T-cell (primary cell): ENCODE measurements at regions of chr12 and their contacts with region 1.

Region 1: DNA sequence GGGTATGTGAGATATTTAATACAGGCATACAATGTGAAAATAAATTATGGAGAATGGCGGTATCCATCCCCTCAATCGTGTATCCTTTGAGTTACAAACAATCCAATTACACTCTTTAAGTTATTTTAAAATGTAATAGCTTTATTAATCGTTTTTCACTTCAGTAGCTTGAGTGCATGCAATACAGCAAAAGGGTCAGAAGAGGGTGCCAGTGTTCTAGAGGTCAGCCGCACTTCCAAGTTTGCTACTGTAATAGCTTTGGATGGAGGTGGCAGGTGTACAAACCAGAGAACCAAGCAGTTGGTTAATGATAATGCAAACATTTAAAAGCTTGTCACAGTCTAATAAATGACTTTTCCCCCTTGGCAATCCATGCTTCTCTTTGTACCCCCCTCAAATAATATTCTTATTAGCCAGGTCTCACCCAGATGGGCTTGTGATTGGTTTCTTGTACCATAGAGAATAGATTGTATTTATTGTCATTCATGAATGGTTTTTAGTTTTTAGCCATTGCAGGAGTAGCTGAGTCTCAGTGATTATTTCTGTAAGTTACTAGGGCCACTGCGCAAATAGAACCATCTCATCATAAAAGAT is 127.0 kb downstream of the ERC1 start:
- DNase-seq: peak; percentile 34 to 87 (median 62)
- ATAC-seq: peak in 3 of 4 experiments; percentile 41 to 73 (median 50)
- H3K4me3 ChIP-seq: no peak overlapping the region
- H3K4me3 Mint-ChIP-seq: no peak overlapping the region
- H3K27ac ChIP-seq: no peak overlapping the region
- H3K27ac Mint-ChIP-seq: no peak overlapping the region
- H3K4me1 ChIP-seq: peaks cover 4% of the 10 kb centered on the region in 2 experiments
- H3K4me1 Mint-ChIP-seq: peaks cover 11 to 19% (median 12%) of the 10 kb centered on the region in 3 donors
- H3K27me3 ChIP-seq: no peaks in the 10 kb centered on the region
- H3K27me3 Mint-ChIP-seq: no peaks in the 10 kb centered on the region

Region 2: GRCh38 chr12:1130164-1130563 is 12.1 kb after region 1 on chr12:
- CTCF ChIA-PET with region 1: interaction called, 6 to 18 read pairs
- POLR2A ChIA-PET with region 1: no interaction called
- DNase-seq: peak in 2 of 35 experiments; percentile 5 to 6
- ATAC-seq: peak in 1 of 4 experiments; percentile 53
- H3K4me3 ChIP-seq: no peak overlapping the region
- H3K4me3 Mint-ChIP-seq: no peak overlapping the region
- H3K27ac ChIP-seq: no peak overlapping the region
- H3K27ac Mint-ChIP-seq: peak overlapping the region in 1 of 2 donors; percentile 56
- H3K4me1 ChIP-seq: peaks cover 2 to 11% of the 10 kb centered on the region in 2 experiments
- H3K4me1 Mint-ChIP-seq: peaks cover 45 to 51% (median 46%) of the 10 kb centered on the region in 3 donors
- H3K27me3 ChIP-seq: no peaks in the 10 kb centered on the region
- H3K27me3 Mint-ChIP-seq: no peaks in the 10 kb centered on the region

Region 3: DNA sequence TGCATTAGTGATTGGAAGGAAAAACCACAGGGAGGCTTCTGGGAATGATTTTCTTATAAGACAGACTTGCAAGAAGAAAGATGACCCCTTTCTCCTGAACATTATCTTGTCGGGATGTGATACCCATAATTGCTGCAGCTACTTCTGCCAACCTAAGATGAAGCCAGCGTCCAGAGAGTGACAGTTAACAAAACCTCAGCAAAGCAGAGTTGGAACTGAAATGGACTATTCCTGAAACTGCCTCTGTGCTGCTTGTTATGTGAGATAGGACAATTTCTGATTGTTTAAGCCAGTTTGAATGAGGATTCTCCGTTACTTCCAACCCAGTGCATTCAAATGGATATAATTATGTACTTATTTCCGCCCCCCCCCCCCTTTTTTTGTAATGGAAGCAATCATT is 77.4 kb after region 1 on chr12:
- CTCF ChIA-PET with region 1: interaction called in 1 of 2 experiments, 10 read pairs
- POLR2A ChIA-PET with region 1: no interaction called
- DNase-seq: no peak
- ATAC-seq: no peak
- H3K4me3 ChIP-seq: no peak overlapping the region
- H3K4me3 Mint-ChIP-seq: no peak overlapping the region
- H3K27ac ChIP-seq: no peak overlapping the region
- H3K27ac Mint-ChIP-seq: no peak overlapping the region
- H3K4me1 ChIP-seq: peaks cover 0 to 2% of the 10 kb centered on the region in 2 experiments
- H3K4me1 Mint-ChIP-seq: peaks cover 0 to 4% (median 2%) of the 10 kb centered on the region in 3 donors
- H3K27me3 ChIP-seq: no peaks in the 10 kb centered on the region
- H3K27me3 Mint-ChIP-seq: no peaks in the 10 kb centered on the region

Region 4: GRCh38 chr12:1357171-1357570 is 239.1 kb after region 1 on chr12:
- CTCF ChIA-PET with region 1: no interaction called
- POLR2A ChIA-PET with region 1: no interaction called
- DNase-seq: no peak
- ATAC-seq: no peak
- H3K4me3 ChIP-seq: no peak overlapping the region
- H3K4me3 Mint-ChIP-seq: no peak overlapping the region
- H3K27ac ChIP-seq: no peak overlapping the region
- H3K27ac Mint-ChIP-seq: no peak overlapping the region
- H3K4me1 ChIP-seq: no peaks in the 10 kb centered on the region
- H3K4me1 Mint-ChIP-seq: no peaks in the 10 kb centered on the region
- H3K27me3 ChIP-seq: no peaks in the 10 kb centered on the region
- H3K27me3 Mint-ChIP-seq: no peaks in the 10 kb centered on the region

Region 5: GRCh38 chr12:1403417-1403816 is 285.4 kb after region 1 on chr12:
- CTCF ChIA-PET with region 1: no interaction called
- POLR2A ChIA-PET with region 1: no interaction called
- DNase-seq: no peak
- ATAC-seq: no peak
- H3K4me3 ChIP-seq: no peak overlapping the region
- H3K4me3 Mint-ChIP-seq: no peak overlapping the region
- H3K27ac ChIP-seq: no peak overlapping the region
- H3K27ac Mint-ChIP-seq: no peak overlapping the region
- H3K4me1 ChIP-seq: no peaks in the 10 kb centered on the region
- H3K4me1 Mint-ChIP-seq: no peaks in the 10 kb centered on the region
- H3K27me3 ChIP-seq: no peaks in the 10 kb centered on the region
- H3K27me3 Mint-ChIP-seq: no peaks in the 10 kb centered on the region

Region 6: DNA sequence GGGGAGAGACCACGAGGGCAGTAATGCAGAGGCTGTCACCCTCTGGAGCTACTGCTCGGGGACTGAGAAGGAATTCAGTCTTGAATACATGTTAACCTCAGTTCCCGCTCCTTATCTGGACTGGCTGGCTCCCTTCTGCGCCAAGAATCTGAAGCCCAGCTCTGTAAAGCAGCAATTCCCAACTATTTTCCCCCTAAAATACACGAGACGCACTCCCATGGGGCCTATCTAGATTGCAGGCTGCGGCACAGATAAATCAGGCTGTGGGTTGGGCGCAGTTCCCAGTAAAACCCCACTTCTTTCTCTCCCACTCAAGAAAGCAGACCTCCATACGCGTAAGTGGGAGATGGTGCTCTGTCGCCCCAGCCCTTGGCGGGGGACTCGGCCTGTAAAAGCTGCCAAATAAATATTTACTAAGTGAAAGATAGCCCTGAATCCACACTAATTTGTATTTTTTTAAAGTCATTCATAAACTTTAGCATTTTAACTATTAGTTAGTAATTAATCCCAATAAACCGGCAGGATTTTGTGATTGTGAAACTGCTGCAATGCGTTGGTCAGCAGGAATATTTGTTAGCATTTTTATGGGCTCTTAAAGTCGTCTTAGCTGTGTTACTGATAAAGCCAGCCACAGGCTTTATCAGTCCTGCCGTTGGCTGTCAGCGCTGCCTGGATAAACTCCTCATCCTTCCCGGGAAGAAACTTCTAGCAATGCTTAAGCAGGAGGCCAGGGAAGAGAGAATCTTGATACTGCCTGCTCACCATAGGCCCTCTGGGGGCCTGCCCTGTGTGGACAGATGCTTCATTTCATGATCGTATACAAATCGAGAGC is 458.6 kb after region 1 on chr12:
- CTCF ChIA-PET with region 1: interaction called, 29 to 195 read pairs
- POLR2A ChIA-PET with region 1: no interaction called
- DNase-seq: no peak
- ATAC-seq: no peak
- H3K4me3 ChIP-seq: no peak overlapping the region
- H3K4me3 Mint-ChIP-seq: no peak overlapping the region
- H3K27ac ChIP-seq: no peak overlapping the region
- H3K27ac Mint-ChIP-seq: no peak overlapping the region
- H3K4me1 ChIP-seq: no peaks in the 10 kb centered on the region
- H3K4me1 Mint-ChIP-seq: peaks cover 0 to 8% (median 2%) of the 10 kb centered on the region in 3 donors
- H3K27me3 ChIP-seq: no peaks in the 10 kb centered on the region
- H3K27me3 Mint-ChIP-seq: peaks cover 0 to 7% of the 10 kb centered on the region in 2 donors

Region 7: GRCh38 chr12:1594261-1595025 is 476.4 kb after region 1 on chr12 and contains the start of gene FBXL14:
- CTCF ChIA-PET with region 1: interaction called, 18 to 55 read pairs
- POLR2A ChIA-PET with region 1: interaction called in 1 of 2 experiments, 4 read pairs
- DNase-seq: peak; percentile 77 to 95 (median 87)
- ATAC-seq: peak; percentile 70 to 75 (median 72)
- H3K4me3 ChIP-seq: peak within 1 kb of the TSS; percentile 78 to 79
- H3K4me3 Mint-ChIP-seq: peak within 1 kb of the TSS; percentile 85 to 95 (median 92)
- H3K27ac ChIP-seq: peak within 1 kb of the TSS; percentile 88
- H3K27ac Mint-ChIP-seq: peak within 1 kb of the TSS; percentile 92 to 93
- H3K4me1 ChIP-seq: peaks cover 17 to 35% of the 10 kb centered on the region in 2 experiments
- H3K4me1 Mint-ChIP-seq: peaks cover 42 to 54% (median 51%) of the 10 kb centered on the region in 3 donors
- H3K27me3 ChIP-seq: no peaks in the 10 kb centered on the region
- H3K27me3 Mint-ChIP-seq: no peaks in the 10 kb centered on the region
- total RNA-seq, gene FBXL14: 27.3 to 48.7 (median 42.5) TPM

Region 8: DNA sequence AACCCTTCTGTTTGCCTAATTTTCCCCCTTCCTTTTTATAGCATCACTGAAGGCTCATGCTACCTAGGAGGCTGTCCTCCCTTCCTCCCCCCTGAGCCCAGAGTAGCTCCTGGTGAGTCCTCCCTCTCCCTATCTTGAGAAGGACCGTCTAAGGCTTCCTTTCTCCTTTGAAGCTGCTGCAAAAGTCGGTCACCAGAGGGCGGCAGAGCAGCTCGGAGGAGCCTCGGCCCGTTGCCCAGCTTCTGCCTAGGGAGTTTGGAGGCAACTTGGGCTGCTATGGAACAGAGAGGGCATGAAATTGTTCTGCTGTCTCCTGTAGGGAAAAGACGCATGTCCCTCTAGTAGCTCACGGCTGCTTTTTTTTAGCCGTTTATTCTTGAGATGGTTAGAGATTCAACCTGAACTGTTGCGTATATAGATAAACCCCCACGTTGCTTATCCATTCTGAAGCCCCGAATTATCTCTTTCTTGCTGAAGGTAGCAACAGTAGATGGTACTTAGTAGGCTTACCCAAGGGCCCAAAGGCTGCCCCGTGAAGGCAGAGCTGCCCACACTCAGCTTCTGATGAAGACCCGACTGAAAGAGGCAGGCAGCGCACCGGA is 516.6 kb after region 1 on chr12:
- CTCF ChIA-PET with region 1: interaction called, 9 to 14 read pairs
- POLR2A ChIA-PET with region 1: no interaction called
- DNase-seq: peak; percentile 16 to 72 (median 48)
- ATAC-seq: peak; percentile 53 to 76 (median 56)
- H3K4me3 ChIP-seq: no peak overlapping the region
- H3K4me3 Mint-ChIP-seq: no peak overlapping the region
- H3K27ac ChIP-seq: no peak overlapping the region
- H3K27ac Mint-ChIP-seq: peak overlapping the region in 1 of 2 donors; percentile 69
- H3K4me1 ChIP-seq: peaks cover 2 to 15% of the 10 kb centered on the region in 2 experiments
- H3K4me1 Mint-ChIP-seq: peaks cover 7 to 17% (median 9%) of the 10 kb centered on the region in 3 donors
- H3K27me3 ChIP-seq: peaks cover 3 to 51% of the 10 kb centered on the region in 2 experiments
- H3K27me3 Mint-ChIP-seq: peaks cover 41 to 42% of the 10 kb centered on the region in 2 donors